ENCODE measurements at regions of chr7 and their contacts with region 1.

Region 1: DNA sequence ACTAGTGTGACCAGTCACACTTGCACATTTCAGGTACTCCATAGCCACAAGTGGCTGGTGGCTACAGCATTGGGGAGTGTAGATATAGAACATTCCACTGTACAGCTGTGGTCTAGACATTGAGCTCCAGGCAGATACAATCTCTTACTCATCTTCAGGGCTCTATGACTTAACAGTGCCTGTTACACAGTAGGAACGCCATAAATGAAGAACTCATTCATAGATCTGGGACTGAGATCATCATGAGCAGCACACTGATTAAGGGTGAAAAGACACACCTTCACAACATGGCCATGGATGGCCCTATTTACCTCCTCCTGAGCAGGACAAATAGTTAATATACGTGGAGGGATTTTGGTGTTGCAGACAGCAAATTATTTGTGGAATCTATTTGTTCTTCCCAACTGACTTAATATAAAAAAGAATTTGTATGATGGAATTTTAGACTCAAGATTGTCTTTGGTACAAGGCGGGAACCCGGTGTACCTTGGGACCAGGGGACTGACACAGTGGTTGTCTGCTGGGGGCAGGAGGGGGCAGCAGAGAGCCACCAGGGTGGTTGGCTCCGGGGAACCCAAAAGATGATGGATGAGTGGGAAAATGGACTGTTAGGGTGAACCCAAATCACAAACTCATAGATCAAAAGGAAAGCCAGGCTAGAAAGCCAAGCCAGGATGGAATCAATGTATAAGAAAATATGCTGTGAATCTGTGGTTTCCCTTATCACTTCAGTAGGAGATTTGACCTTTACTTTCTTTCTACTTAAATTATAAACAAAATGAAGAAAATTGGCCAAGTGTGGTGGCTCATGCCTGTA is 24.3 kb upstream of the CPA2 start:
- DNase-seq: peak; percentile 57 to 69
- ATAC-seq: peak in 3 of 4 donors; percentile 78 to 83 (median 78)
- H3K4me3 ChIP-seq: no peak overlapping the region
- H3K27ac ChIP-seq: no peak overlapping the region
- H3K4me1 ChIP-seq: no peaks in the 10 kb centered on the region
- H3K27me3 ChIP-seq: no peaks in the 10 kb centered on the region
- CTCF ChIP-seq: peak; percentile 79

Region 2: DNA sequence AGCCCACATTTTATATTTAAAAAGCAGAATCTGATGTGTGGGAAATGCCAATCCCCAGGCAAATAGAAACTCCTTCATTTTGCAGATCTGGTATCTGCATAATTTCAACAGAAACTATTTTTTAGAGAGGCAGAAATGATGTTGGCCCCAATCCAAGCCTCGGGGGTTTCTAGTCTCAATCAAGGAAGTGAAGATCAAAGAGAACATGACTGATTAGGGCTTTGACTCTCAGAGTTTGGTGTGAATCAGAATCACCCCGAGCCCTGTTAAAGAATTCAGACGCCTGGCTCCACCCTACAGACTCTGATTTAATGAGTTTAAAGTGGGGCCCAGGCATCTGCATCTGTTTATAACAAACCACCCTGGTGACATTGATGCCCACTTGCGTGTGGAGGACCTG is 252.9 kb before region 1 on chr7:
- intact Hi-C with region 1: no loop called
- DNase-seq: no peak
- ATAC-seq: no peak
- H3K4me3 ChIP-seq: no peak overlapping the region
- H3K27ac ChIP-seq: no peak overlapping the region
- H3K4me1 ChIP-seq: peaks cover 9% of the 10 kb centered on the region
- H3K27me3 ChIP-seq: no peaks in the 10 kb centered on the region
- CTCF ChIP-seq: no peak

Region 3: DNA sequence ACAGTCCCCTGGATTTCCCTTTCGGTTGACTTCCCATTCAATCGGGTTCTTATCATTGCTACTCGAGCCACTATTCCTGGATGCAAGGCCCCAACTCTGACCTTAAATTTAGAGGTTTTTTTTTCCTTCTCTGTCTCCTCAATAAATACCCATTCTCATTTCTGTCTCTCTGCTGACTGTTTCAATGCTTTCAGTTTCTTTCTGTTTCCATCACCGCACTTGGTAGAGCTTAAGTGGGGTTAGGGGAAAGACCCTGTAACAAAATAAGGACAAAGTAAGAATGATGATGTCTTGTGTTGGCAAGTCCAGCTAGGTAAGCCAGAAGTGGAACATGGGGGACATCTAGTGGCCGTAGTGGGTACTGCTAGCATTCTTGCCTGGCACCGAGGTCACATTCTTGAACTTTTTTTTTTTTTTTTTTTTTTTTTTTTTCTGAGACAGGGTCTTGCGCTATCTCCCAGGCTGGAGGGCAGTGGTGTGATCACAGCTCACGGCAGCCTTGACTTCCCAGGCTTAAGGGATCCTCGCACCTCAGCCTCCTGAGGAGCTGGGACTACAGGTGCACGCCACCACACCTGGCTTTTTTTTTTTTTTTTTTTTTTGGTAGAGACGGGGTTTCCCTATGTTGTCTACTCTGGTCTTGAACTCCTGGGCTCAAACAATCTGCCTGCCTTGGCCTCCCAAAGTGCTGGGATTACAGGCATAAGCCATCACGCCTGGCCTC is 231.6 kb before region 1 on chr7:
- intact Hi-C with region 1: no loop called
- DNase-seq: peak; percentile 71 to 86
- ATAC-seq: peak; percentile 70 to 84 (median 77)
- H3K4me3 ChIP-seq: no peak overlapping the region
- H3K27ac ChIP-seq: peak overlapping the region; percentile 85
- H3K4me1 ChIP-seq: peaks cover 28% of the 10 kb centered on the region
- H3K27me3 ChIP-seq: no peaks in the 10 kb centered on the region
- CTCF ChIP-seq: peak; percentile 91

Region 4: DNA sequence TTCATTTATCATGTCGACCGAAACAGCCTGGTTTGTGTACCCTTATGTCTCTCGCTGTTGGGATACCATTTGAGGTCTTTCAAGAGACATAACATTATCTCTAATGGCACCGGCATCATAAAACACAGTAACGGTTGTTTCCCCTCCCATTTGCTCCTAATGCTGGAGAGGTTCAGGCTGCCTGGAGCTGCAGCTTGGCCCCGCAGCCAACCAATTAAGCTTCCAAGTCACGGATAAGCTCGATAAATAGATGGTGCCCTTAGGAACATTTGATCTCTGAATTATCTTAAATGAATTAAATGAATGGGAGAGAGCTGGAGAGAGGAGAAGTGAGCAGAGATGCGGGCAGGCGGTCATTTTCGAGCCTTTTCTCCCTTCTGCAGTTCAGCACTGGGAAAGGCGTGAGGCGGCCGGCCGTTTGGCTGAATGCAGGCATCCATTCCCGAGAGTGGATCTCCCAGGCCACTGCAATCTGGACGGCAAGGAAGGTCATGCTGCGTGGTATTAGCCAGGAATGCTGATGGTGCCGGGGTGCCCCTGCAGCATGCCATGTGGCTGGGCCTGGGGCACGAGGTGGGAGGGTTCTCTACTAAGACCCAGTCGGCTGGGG is 63.1 kb after region 1 on chr7:
- intact Hi-C with region 1: no loop called
- DNase-seq: no peak
- ATAC-seq: no peak
- H3K4me3 ChIP-seq: no peak overlapping the region
- H3K27ac ChIP-seq: no peak overlapping the region
- H3K4me1 ChIP-seq: no peaks in the 10 kb centered on the region
- H3K27me3 ChIP-seq: no peaks in the 10 kb centered on the region
- CTCF ChIP-seq: no peak

Region 5: GRCh38 chr7:130486114-130486958 is 243.9 kb after region 1 on chr7:
- intact Hi-C with region 1: loop called in 1 of 2 experiments (anchors 5 kb)
- DNase-seq: peak; percentile 56 to 61
- ATAC-seq: peak in 2 of 4 donors; percentile 45 to 54
- H3K4me3 ChIP-seq: peak overlapping the region; percentile 57
- H3K27ac ChIP-seq: no peak overlapping the region
- H3K4me1 ChIP-seq: no peaks in the 10 kb centered on the region
- H3K27me3 ChIP-seq: peaks cover 0 to 26% (median 12%) of the 10 kb centered on the region in 3 donors
- CTCF ChIP-seq: peak; percentile 33

Region 6: GRCh38 chr7:130560970-130561369 is 318.6 kb after region 1 on chr7:
- intact Hi-C with region 1: loop called in 1 of 2 experiments (anchors 2 kb)
- DNase-seq: no peak
- ATAC-seq: no peak
- H3K4me3 ChIP-seq: no peak overlapping the region
- H3K27ac ChIP-seq: no peak overlapping the region
- H3K4me1 ChIP-seq: no peaks in the 10 kb centered on the region
- H3K27me3 ChIP-seq: no peaks in the 10 kb centered on the region
- CTCF ChIP-seq: peak; percentile 18

Region 7: GRCh38 chr7:130721486-130722280 is 479.3 kb after region 1 on chr7:
- intact Hi-C with region 1: loop called (anchors 5 to 10 kb)
- DNase-seq: peak; percentile 50 to 79
- ATAC-seq: peak; percentile 75 to 91 (median 85)
- H3K4me3 ChIP-seq: no peak overlapping the region
- H3K27ac ChIP-seq: no peak overlapping the region
- H3K4me1 ChIP-seq: no peaks in the 10 kb centered on the region
- H3K27me3 ChIP-seq: peaks cover 0 to 6% (median 0%) of the 10 kb centered on the region in 3 donors
- CTCF ChIP-seq: peak; percentile 63